ENCODE measurements at regions of chr11 and their contacts with region 1.

Region 1: GRCh38 chr11:47858169-47858543 is 10.0 kb upstream of the NUP160 start:
- DNase-seq: peak; percentile 61
- ATAC-seq: peak; percentile 95
- H3K4me3 ChIP-seq: no peak overlapping the region
- H3K27ac ChIP-seq: peak overlapping the region; percentile 40
- H3K4me1 ChIP-seq: peaks cover 10% of the 10 kb centered on the region
- H3K27me3 ChIP-seq: no peaks in the 10 kb centered on the region
- CTCF ChIP-seq: no peak

Region 2: GRCh38 chr11:47724041-47724729 is 134.0 kb before region 1 on chr11:
- CTCF ChIA-PET with region 1: no interaction called
- POLR2A ChIA-PET with region 1: no interaction called
- intact Hi-C with region 1: no loop called
- DNase-seq: peak; percentile 32
- ATAC-seq: no peak; the same call in 1 of the 2 replicates
- H3K4me3 ChIP-seq: no peak overlapping the region
- H3K27ac ChIP-seq: no peak overlapping the region
- H3K4me1 ChIP-seq: no peaks in the 10 kb centered on the region
- H3K27me3 ChIP-seq: no peaks in the 10 kb centered on the region
- CTCF ChIP-seq: no peak

Region 3: DNA sequence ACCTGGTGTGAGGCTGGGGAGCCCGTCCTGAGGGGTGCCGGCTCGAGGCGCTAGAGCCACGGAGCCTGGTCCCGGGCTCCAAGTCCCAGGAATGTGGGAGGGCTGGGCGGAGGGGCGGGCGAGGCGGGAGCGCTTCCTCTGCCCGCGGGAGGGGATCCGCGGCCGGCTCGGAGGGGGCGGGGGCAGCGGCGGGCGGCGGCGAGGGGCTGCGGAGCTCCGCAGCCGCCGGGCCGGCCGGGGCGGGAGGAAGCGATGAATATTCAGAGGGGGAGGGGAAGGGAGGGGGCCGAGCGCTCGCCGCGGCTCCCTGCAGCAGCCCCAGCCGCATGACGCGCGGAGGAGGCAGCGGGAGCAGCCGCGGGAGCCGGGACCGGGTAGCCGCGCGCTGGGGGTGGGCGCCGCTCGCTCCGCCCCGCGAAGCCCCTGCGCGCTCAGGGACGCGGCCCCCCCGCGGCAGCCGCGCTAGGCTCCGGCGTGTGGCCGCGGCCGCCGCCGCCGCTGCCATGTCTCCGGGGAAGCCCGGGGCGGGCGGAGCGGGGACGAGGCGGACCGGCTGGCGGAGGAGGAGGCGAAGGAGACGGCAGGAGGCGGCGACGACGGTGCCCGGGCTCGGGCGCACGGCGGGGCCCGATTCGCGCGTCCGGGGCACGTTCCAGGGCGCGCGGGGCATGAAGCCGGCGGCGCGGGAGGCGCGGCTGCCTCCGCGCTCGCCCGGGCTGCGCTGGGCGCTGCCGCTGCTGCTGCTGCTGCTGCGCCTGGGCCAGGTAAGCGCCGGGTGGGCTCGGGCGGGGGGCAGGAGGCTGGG is 122.3 kb after region 1 on chr11 and contains the start of gene PTPRJ:
- CTCF ChIA-PET with region 1: interaction called, 3 read pairs
- POLR2A ChIA-PET with region 1: no interaction called
- intact Hi-C with region 1: loop called (anchors 10 kb)
- DNase-seq: peak; percentile 49
- ATAC-seq: peak; percentile 49
- H3K4me3 ChIP-seq: peak within 1 kb of the TSS; percentile 86
- H3K27ac ChIP-seq: no peak within 1 kb of the TSS
- H3K4me1 ChIP-seq: peaks cover 26% of the 10 kb centered on the region
- H3K27me3 ChIP-seq: no peaks in the 10 kb centered on the region
- CTCF ChIP-seq: no peak
- total RNA-seq, gene PTPRJ: 10.5 and 12.8 TPM in 2 replicates

Measured in PC-3 (cell line).